GM12878 (cell line): ENCODE measurements at regions of chr11 and their contacts with region 1.

Region 1: GRCh38 chr11:6362873-6363678 is 27.2 kb upstream of the SMPD1 start:
- DNase-seq: no peak
- ATAC-seq: peak; percentile 100
- H3K4me3 ChIP-seq: no peak overlapping the region
- H3K27ac ChIP-seq: no peak overlapping the region
- H3K4me1 ChIP-seq: no peaks in the 10 kb centered on the region
- H3K27me3 ChIP-seq: peaks cover 0 to 2% of the 10 kb centered on the region in 2 experiments; a peak in 1 of 4 replicates
- CTCF ChIP-seq: peak; percentile 88 to 95 (median 91)
- EP300 ChIP-seq: no peak
- POLR2A ChIP-seq: no peak
- RAD21 ChIP-seq: peak; percentile 84

Region 2: DNA sequence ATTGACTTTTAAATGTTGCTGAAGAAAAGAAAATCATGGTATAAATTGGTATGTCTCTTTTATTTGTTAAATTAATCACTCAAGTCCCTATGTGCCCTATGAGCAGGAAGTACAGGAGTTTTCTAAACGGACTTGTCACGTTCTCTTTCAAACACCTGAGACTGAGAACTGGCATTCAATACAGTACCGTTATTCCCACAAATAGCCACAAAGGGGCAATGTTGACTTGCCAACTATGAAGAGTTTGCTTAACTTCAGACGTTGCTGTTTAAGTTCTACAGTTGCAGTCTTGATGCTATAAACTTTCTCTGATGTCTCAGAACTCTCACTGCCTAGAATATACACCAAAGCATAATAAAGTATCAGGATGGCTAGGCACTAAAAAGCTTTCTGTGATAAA is 340.1 kb before region 1 on chr11:
- CTCF ChIA-PET with region 1: interaction called, 12 read pairs
- POLR2A ChIA-PET with region 1: no interaction called
- RAD21 ChIA-PET with region 1: interaction called, 4 read pairs
- SMC1A ChIA-PET with region 1: interaction called, 4 read pairs
- in situ Hi-C with region 1: loop called (anchors 5 kb)
- intact Hi-C with region 1: no loop called
- DNase-seq: peak; percentile 5
- ATAC-seq: peak; percentile 76
- H3K4me3 ChIP-seq: no peak overlapping the region
- H3K27ac ChIP-seq: no peak overlapping the region
- H3K4me1 ChIP-seq: no peaks in the 10 kb centered on the region
- H3K27me3 ChIP-seq: no peaks in the 10 kb centered on the region
- CTCF ChIP-seq: peak; percentile 49 to 59 (median 53); a peak in 5 of 6 replicates
- EP300 ChIP-seq: no peak
- POLR2A ChIP-seq: no peak
- RAD21 ChIP-seq: peak; percentile 75

Region 3: GRCh38 chr11:6298605-6299004 is 64.5 kb before region 1 on chr11:
- CTCF ChIA-PET with region 1: interaction called, 32 read pairs
- POLR2A ChIA-PET with region 1: no interaction called
- RAD21 ChIA-PET with region 1: interaction called, 4 read pairs
- SMC1A ChIA-PET with region 1: interaction called, 6 read pairs
- in situ Hi-C with region 1: no loop called
- intact Hi-C with region 1: no loop called
- DNase-seq: no peak
- ATAC-seq: peak; percentile 96
- H3K4me3 ChIP-seq: no peak overlapping the region
- H3K27ac ChIP-seq: no peak overlapping the region
- H3K4me1 ChIP-seq: no peaks in the 10 kb centered on the region
- H3K27me3 ChIP-seq: no peaks in the 10 kb centered on the region
- CTCF ChIP-seq: peak; percentile 49 to 75 (median 67); a peak in 5 of 6 replicates
- EP300 ChIP-seq: no peak
- POLR2A ChIP-seq: no peak
- RAD21 ChIP-seq: peak; percentile 28; the same call in 1 of the 2 replicates

Region 4: GRCh38 chr11:6315811-6316425 is 47.2 kb before region 1 on chr11:
- CTCF ChIA-PET with region 1: interaction called, 26 read pairs
- POLR2A ChIA-PET with region 1: no interaction called
- RAD21 ChIA-PET with region 1: interaction called, 3 read pairs
- SMC1A ChIA-PET with region 1: no interaction called
- in situ Hi-C with region 1: no loop called
- intact Hi-C with region 1: no loop called
- DNase-seq: no peak
- ATAC-seq: peak; percentile 86
- H3K4me3 ChIP-seq: no peak overlapping the region
- H3K27ac ChIP-seq: no peak overlapping the region
- H3K4me1 ChIP-seq: peaks cover 15% of the 10 kb centered on the region
- H3K27me3 ChIP-seq: no peaks in the 10 kb centered on the region; a peak in 1 of 4 replicates
- CTCF ChIP-seq: peak; percentile 78 to 88 (median 85)
- EP300 ChIP-seq: no peak
- POLR2A ChIP-seq: no peak
- RAD21 ChIP-seq: peak; percentile 83

Region 5: DNA sequence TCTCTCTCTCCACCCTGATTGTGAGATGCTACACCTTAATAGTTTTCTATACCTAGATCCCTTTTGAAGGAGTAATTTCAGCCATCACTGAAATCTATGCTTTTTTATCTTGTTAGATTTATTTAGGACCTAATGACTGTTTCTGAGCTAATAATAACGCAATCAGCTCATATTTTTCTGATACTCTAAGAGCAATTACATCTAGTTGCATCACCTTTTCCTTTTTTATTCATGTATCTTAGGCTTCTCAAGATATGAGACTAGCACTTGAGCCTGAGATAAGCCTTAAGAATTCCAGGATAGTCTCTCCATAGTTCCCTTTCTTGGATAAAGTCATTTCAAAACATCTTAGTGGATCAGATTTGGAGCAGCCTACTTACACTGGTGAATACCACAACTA is 17.7 kb before region 1 on chr11:
- CTCF ChIA-PET with region 1: interaction called, 59 read pairs
- POLR2A ChIA-PET with region 1: no interaction called
- RAD21 ChIA-PET with region 1: no interaction called
- SMC1A ChIA-PET with region 1: interaction called, 13 read pairs
- in situ Hi-C with region 1: no loop called
- intact Hi-C with region 1: no loop called
- DNase-seq: no peak
- ATAC-seq: no peak
- H3K4me3 ChIP-seq: no peak overlapping the region
- H3K27ac ChIP-seq: no peak overlapping the region
- H3K4me1 ChIP-seq: no peaks in the 10 kb centered on the region
- H3K27me3 ChIP-seq: no peaks in the 10 kb centered on the region; a peak in 1 of 4 replicates
- CTCF ChIP-seq: no peak
- EP300 ChIP-seq: no peak
- POLR2A ChIP-seq: no peak
- RAD21 ChIP-seq: no peak

Region 6: GRCh38 chr11:6556139-6556949 is 193.3 kb after region 1 on chr11:
- CTCF ChIA-PET with region 1: no interaction called
- POLR2A ChIA-PET with region 1: no interaction called
- RAD21 ChIA-PET with region 1: no interaction called
- SMC1A ChIA-PET with region 1: no interaction called
- in situ Hi-C with region 1: no loop called
- intact Hi-C with region 1: no loop called
- DNase-seq: no peak
- ATAC-seq: no peak
- H3K4me3 ChIP-seq: no peak overlapping the region
- H3K27ac ChIP-seq: no peak overlapping the region
- H3K4me1 ChIP-seq: no peaks in the 10 kb centered on the region
- H3K27me3 ChIP-seq: no peaks in the 10 kb centered on the region
- CTCF ChIP-seq: no peak
- EP300 ChIP-seq: no peak
- POLR2A ChIP-seq: no peak
- RAD21 ChIP-seq: no peak